ENCODE measurements at regions of chr12 and their contacts with region 1.

Region 1: GRCh38 chr12:76144245-76144549 is 59.7 kb upstream of the NAP1L1 start:
- DNase-seq: peak; percentile 30
- H3K4me3 Mint-ChIP-seq: no peak overlapping the region
- H3K27ac Mint-ChIP-seq: no peak overlapping the region
- H3K4me1 Mint-ChIP-seq: peaks cover 8% of the 10 kb centered on the region
- H3K27me3 Mint-ChIP-seq: no peaks in the 10 kb centered on the region
- CTCF ChIP-seq: no peak

Region 2: GRCh38 chr12:75722714-75723200 is 421.4 kb before region 1 on chr12:
- CTCF ChIA-PET with region 1: no interaction called
- POLR2A ChIA-PET with region 1: no interaction called
- intact Hi-C with region 1: loop called (anchors 5 kb)
- DNase-seq: peak; percentile 92
- H3K4me3 Mint-ChIP-seq: peak overlapping the region; percentile 5
- H3K27ac Mint-ChIP-seq: peak overlapping the region; percentile 94
- H3K4me1 Mint-ChIP-seq: peaks cover 49% of the 10 kb centered on the region
- H3K27me3 Mint-ChIP-seq: no peaks in the 10 kb centered on the region
- CTCF ChIP-seq: no peak

Region 3: GRCh38 chr12:76010732-76011458 is 133.3 kb before region 1 on chr12:
- CTCF ChIA-PET with region 1: no interaction called
- POLR2A ChIA-PET with region 1: no interaction called
- intact Hi-C with region 1: no loop called
- DNase-seq: no peak
- H3K4me3 Mint-ChIP-seq: no peak overlapping the region
- H3K27ac Mint-ChIP-seq: no peak overlapping the region
- H3K4me1 Mint-ChIP-seq: peaks cover 8% of the 10 kb centered on the region
- H3K27me3 Mint-ChIP-seq: no peaks in the 10 kb centered on the region
- CTCF ChIP-seq: no peak